ENCODE measurements at regions of chr6 and their contacts with region 1.

Region 1: GRCh38 chr6:85637579-85637978 is 5.1 kb downstream of the SYNCRIP start:
- DNase-seq: no peak
- ATAC-seq: no peak
- H3K4me3 ChIP-seq: no peak overlapping the region
- H3K27ac ChIP-seq: no peak overlapping the region
- H3K4me1 ChIP-seq: no peaks in the 10 kb centered on the region
- H3K27me3 ChIP-seq: no peaks in the 10 kb centered on the region

Region 2: DNA sequence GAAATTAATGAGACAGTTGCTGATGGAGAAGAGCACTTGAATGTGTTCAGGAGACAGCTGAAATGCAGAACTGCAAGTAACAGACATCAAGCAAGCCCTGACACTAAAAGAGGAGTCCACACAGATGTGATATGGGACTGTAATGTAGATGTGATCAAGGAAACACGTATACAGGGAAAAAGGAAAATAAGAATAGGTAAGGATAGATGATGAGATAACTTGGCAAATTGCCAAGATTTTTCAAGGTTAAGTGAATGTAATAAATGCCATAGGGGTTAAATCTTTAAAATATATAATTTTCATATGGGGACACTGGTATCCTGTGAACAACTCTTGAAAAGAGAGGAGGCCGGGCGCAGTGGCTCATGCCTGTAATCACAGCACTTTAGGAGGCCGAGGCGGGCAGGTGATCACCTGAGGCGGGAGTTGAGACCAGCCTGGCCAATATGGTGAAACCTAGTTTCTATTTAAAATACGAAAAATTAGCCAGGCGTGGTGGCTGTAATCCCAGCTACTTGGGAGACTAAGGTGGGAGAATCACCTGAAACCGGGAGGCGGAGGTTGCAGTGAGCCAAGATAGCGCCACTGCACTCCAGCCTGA is 36.8 kb before region 1 on chr6:
- intact Hi-C with region 1: loop called in 1 of 2 experiments (anchors 5 kb)
- DNase-seq: no peak
- ATAC-seq: no peak
- H3K4me3 ChIP-seq: no peak overlapping the region
- H3K27ac ChIP-seq: no peak overlapping the region
- H3K4me1 ChIP-seq: no peaks in the 10 kb centered on the region
- H3K27me3 ChIP-seq: no peaks in the 10 kb centered on the region

Measured in aorta (tissue), 5 donors.